ENCODE measurements at regions of chr6 and their contacts with region 1.

Region 1: GRCh38 chr6:113970805-113971676 is at the start of gene HDAC2:
- DNase-seq: peak; percentile 90
- H3K4me3 Mint-ChIP-seq: peak within 1 kb of the TSS; percentile 96
- H3K27ac Mint-ChIP-seq: peak within 1 kb of the TSS; percentile 96
- H3K4me1 Mint-ChIP-seq: peaks cover 29% of the 10 kb centered on the region
- H3K27me3 Mint-ChIP-seq: no peaks in the 10 kb centered on the region
- total RNA-seq, gene HDAC2: 93.7 to 95.1 TPM

Region 2: GRCh38 chr6:113960795-113961194 is 10.2 kb before region 1 on chr6:
- CTCF ChIA-PET with region 1: interaction called, 3 read pairs
- POLR2A ChIA-PET with region 1: no interaction called
- intact Hi-C with region 1: loop called (anchors 1 kb)
- DNase-seq: no peak
- H3K4me3 Mint-ChIP-seq: no peak overlapping the region
- H3K27ac Mint-ChIP-seq: no peak overlapping the region
- H3K4me1 Mint-ChIP-seq: peaks cover 27% of the 10 kb centered on the region
- H3K27me3 Mint-ChIP-seq: no peaks in the 10 kb centered on the region

Region 3: GRCh38 chr6:114042267-114043016 is 71.4 kb after region 1 on chr6:
- CTCF ChIA-PET with region 1: no interaction called
- POLR2A ChIA-PET with region 1: no interaction called
- intact Hi-C with region 1: no loop called
- DNase-seq: no peak
- H3K4me3 Mint-ChIP-seq: no peak overlapping the region
- H3K27ac Mint-ChIP-seq: no peak overlapping the region
- H3K4me1 Mint-ChIP-seq: peaks cover 2% of the 10 kb centered on the region
- H3K27me3 Mint-ChIP-seq: no peaks in the 10 kb centered on the region

Region 4: DNA sequence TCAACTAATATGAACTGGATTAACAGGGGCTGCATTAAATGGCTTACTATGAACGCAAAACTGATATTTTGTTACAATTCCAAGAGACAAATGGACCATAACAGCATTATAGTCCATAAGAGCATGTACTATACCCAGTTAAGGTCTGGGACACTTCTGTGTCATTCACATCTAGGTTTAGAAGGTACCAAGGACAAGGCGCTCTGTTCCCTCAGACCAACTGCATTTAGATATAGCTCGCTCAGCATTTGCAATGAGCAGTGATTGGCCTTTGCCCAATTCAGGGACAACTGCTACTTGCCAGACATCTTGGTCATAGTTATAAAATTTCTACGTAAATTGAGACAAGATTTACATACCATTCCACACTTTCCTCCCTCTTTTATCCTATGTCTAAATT is 239.4 kb after region 1 on chr6:
- CTCF ChIA-PET with region 1: no interaction called
- POLR2A ChIA-PET with region 1: no interaction called
- intact Hi-C with region 1: no loop called
- DNase-seq: no peak
- H3K4me3 Mint-ChIP-seq: no peak overlapping the region
- H3K27ac Mint-ChIP-seq: no peak overlapping the region
- H3K4me1 Mint-ChIP-seq: no peaks in the 10 kb centered on the region
- H3K27me3 Mint-ChIP-seq: peaks cover 1% of the 10 kb centered on the region

Measured in activated CD4-positive, alpha-beta memory T cell treated with anti-CD3 and anti-CD28 coated beads for 36 hours (primary cell).